Heart left ventricle (tissue), 16 donors: ENCODE measurements at regions of chr11 and their contacts with region 1.

Region 1: DNA sequence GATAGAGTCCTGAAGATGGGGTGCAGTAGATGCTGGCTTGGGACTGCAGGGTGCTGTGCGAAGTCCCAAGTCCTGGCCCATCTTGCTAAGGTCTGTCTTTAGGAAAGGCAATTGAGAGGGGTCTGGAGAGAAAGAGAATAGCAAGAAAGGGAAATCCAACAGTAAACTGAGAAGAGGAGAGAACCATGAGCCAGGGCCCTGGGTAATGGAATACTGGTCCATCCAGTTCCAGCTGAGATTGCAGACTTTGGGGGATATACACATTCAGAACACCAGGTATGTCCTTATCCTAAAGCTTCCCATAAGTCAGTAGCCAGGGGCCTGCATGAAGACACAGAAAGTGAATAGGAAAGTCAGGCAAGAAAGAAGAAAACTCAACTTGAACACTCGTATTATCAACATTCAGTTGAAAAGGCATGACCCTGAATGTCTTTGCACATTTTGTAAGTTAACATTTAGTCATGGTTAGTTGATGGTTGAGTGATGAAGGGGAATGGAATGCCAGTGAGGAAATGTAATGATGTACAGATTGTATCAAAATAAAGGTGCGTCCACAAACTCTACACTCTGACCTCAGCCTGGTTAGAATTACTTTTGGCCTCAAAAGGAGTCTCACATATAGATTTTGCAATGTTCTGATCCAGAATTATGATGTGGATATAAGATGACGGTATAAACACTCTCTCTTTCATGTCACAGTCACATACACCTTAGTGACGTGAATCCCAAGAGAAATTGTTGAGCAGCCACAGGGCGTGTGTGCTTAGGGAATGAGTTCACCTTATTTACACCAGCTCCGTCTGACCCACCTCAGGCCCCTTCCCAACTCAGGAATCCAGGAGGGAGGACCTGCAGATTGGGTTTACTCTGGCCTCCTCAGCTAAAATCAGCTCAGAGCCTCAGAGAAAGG is 100.3 kb downstream of the RDX start:
- DNase-seq: no peak
- ATAC-seq: no peak
- H3K4me3 ChIP-seq: no peak overlapping the region
- H3K27ac ChIP-seq: no peak overlapping the region
- H3K4me1 ChIP-seq: peaks cover 0 to 10% (median 0%) of the 10 kb centered on the region in 12 donors
- H3K27me3 ChIP-seq: no peaks in the 10 kb centered on the region
- CTCF ChIP-seq: no peak
- POLR2A ChIP-seq: no peak

Region 2: DNA sequence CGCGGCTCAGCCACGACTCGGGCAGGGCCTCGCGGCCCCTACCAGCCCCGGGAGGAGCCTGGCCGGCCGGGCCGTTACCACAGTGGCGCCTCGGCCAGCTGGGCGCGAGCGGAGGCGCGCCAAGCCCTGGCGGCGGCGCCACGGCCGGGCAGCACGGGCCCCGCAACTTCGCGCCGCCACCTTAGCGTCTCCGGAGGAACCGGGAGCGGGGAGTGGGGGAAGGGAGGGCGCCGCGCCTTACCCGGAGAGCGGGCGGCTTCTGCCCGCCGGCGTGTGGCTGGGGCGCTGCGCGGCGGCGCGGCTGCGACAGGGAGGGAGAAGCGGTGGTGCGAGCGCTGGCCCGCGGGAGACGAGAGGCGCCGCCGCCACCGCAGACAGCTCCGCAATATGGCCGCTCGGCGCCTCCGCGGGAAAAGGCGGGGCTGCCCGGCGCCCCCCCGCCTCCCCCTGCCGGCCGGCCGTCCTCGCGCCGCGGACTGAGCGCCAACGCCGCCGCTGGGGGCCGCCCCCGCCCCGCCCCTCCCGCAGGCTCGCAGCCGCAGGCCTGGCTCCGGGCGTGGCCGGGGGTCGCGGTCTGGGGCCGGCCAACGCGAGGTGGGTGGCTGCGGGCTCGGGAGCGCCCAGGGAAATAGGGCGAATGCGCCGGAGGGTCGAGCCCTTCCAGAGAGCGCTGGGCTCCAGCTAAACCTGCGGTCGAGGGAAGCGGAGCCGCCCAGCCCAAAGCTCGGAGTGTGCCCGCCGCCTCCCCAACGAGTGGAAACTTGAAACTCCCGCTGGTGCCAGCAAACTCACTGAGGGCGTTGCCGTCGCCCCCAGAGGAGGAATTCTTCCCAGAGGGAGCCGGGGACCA is 100.4 kb after region 1 on chr11 and contains the start of gene RDX:
- intact Hi-C with region 1: loop called in 1 of 10 experiments (anchors 5 kb)
- DNase-seq: peak; percentile 82 to 89 (median 85)
- ATAC-seq: peak; percentile 79 to 95 (median 88)
- H3K4me3 ChIP-seq: peak within 1 kb of the TSS; percentile 68 to 99 (median 90)
- H3K27ac ChIP-seq: peak within 1 kb of the TSS; percentile 94 to 99 (median 97)
- H3K4me1 ChIP-seq: peaks cover 0 to 51% (median 33%) of the 10 kb centered on the region in 12 donors
- H3K27me3 ChIP-seq: no peaks in the 10 kb centered on the region
- CTCF ChIP-seq: peak in 4 of 12 donors; percentile 4 to 40 (median 24)
- POLR2A ChIP-seq: peak in 1 of 2 donors; percentile 54
- total RNA-seq, gene RDX: 96.8 to 148 (median 126) TPM

Region 3: GRCh38 chr11:110362971-110363509 is 166.9 kb after region 1 on chr11:
- intact Hi-C with region 1: loop called in 8 of 10 experiments (anchors 1 to 5 kb)
- DNase-seq: peak in 3 of 5 donors; percentile 20 to 36 (median 30)
- ATAC-seq: peak in 3 of 4 donors; percentile 52 to 72 (median 68)
- H3K4me3 ChIP-seq: no peak overlapping the region
- H3K27ac ChIP-seq: peak overlapping the region in 11 of 12 donors; percentile 3 to 70 (median 41)
- H3K4me1 ChIP-seq: peaks cover 6 to 34% (median 14%) of the 10 kb centered on the region in 12 donors
- H3K27me3 ChIP-seq: no peaks in the 10 kb centered on the region
- CTCF ChIP-seq: no peak
- POLR2A ChIP-seq: no peak

Region 4: GRCh38 chr11:110376711-110377324 is 180.7 kb after region 1 on chr11:
- intact Hi-C with region 1: loop called in 5 of 10 experiments (anchors 2 to 5 kb)
- DNase-seq: peak in 4 of 5 donors; percentile 78 to 86 (median 81)
- ATAC-seq: peak; percentile 56 to 89 (median 84)
- H3K4me3 ChIP-seq: peak overlapping the region in 3 of 12 donors; percentile 18 to 34 (median 19)
- H3K27ac ChIP-seq: peak overlapping the region in 6 of 12 donors; percentile 19 to 61 (median 27)
- H3K4me1 ChIP-seq: peaks cover 0 to 44% (median 7%) of the 10 kb centered on the region in 12 donors
- H3K27me3 ChIP-seq: no peaks in the 10 kb centered on the region
- CTCF ChIP-seq: peak; percentile 66 to 90 (median 83)
- POLR2A ChIP-seq: no peak

Region 5: DNA sequence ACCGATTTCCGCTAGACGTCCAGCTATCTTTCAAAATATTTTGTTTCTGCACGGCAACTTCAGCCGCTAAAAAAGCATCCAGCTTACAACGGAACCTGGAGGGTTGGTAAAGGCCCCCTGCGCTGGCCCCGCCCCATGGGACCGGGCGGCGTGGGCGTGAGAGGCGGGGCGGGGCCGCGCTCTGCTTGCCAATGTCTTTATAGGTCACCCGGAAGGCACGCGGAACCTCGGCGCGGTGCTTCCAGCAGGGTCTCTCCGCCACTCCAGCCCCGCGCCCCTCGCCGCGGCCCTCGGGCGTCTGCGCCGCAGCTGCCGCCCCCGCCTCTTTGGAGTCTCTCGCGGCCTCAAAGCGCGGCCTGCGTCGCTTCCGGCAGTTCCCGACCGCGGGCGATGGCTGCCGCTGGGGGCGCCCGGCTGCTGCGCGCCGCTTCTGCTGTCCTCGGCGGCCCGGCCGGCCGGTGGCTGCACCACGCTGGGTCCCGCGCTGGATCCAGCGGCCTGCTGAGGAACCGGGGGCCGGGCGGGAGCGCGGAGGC is 233.7 kb after region 1 on chr11 and contains the start of gene FDX1:
- intact Hi-C with region 1: loop called in 9 of 10 experiments (anchors 2 to 10 kb)
- DNase-seq: peak; percentile 79 to 91 (median 90)
- ATAC-seq: peak; percentile 86 to 97 (median 95)
- H3K4me3 ChIP-seq: peak within 1 kb of the TSS; percentile 73 to 94 (median 84)
- H3K27ac ChIP-seq: peak within 1 kb of the TSS; percentile 74 to 97 (median 91)
- H3K4me1 ChIP-seq: peaks cover 0 to 39% (median 31%) of the 10 kb centered on the region in 12 donors
- H3K27me3 ChIP-seq: no peaks in the 10 kb centered on the region
- CTCF ChIP-seq: peak; percentile 32 to 89 (median 70)
- POLR2A ChIP-seq: peak in 1 of 2 donors; percentile 76
- total RNA-seq, gene FDX1: 15.2 to 28.5 (median 22.5) TPM

Region 6: GRCh38 chr11:111446404-111447111 is 1250.5 kb after region 1 on chr11:
- intact Hi-C with region 1: loop called in 1 of 10 experiments (anchors 10 kb)
- DNase-seq: peak in 4 of 5 donors; percentile 80 to 86 (median 84)
- ATAC-seq: peak; percentile 94 to 97 (median 95)
- H3K4me3 ChIP-seq: no peak overlapping the region
- H3K27ac ChIP-seq: peak overlapping the region in 2 of 12 donors; percentile 32 to 50
- H3K4me1 ChIP-seq: peaks cover 0 to 20% (median 8%) of the 10 kb centered on the region in 12 donors
- H3K27me3 ChIP-seq: peaks cover 0 to 8% (median 0%) of the 10 kb centered on the region in 9 donors
- CTCF ChIP-seq: peak; percentile 64 to 82 (median 74)
- POLR2A ChIP-seq: no peak